Right ventricle myocardium superior (tissue), 1 donor: ENCODE measurements at regions of chr9 and their contacts with region 1.

Region 1: DNA sequence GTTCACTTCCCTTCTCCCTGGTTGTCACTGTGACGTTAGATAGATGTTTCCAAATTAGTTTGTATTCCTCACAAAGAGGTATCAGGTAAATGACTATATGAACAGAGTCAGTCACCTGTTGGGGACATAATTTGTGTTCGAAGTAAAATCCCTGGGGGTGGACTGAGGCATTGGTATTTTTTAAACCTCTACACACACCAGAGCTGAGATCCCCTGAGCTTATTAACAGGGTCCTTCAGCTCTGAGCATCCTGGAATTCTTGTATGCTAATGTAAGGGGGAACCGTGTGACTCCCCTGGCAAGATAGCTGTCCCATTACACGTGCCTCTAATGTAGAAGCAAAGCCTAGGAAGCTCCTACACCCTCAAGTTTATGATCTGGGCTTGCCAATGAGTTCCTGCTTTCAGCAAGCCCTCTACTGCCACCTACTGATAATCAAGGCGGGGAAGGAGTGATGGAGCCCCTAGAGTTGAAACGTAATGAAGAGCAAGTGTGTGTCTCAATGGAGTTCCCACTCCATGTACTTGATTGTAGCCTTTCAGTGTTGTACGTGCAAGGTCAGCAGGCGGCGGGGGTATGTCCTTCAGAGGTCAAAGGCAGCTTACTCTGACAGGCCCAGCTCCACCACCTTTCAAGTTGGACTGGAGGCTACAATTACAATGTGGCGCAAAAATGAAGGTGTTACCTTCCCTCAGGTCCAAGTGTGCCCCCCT is 14.4 kb downstream of the PRKACG start:
- DNase-seq: peak; percentile 50
- ATAC-seq: peak; percentile 90

Region 2: GRCh38 chr9:68802525-68803015 is 197.0 kb before region 1 on chr9:
- intact Hi-C with region 1: no loop called
- DNase-seq: no peak
- ATAC-seq: no peak

Region 3: GRCh38 chr9:68832853-68833518 is 166.6 kb before region 1 on chr9:
- intact Hi-C with region 1: loop called (anchors 10 kb)
- DNase-seq: no peak
- ATAC-seq: no peak